K562 (cell line): ENCODE measurements at regions of chr11 and their contacts with region 1.

Region 1: GRCh38 chr11:3644817-3645235 is at the start of gene ART1:
- DNase-seq: peak; percentile 61 to 78 (median 72)
- ATAC-seq: peak; percentile 57
- H3K4me3 ChIP-seq: no peak within 1 kb of the TSS
- H3K27ac ChIP-seq: no peak within 1 kb of the TSS
- H3K4me1 ChIP-seq: peaks cover 21 to 29% of the 10 kb centered on the region in 2 experiments; a peak in 4 of 5 replicates
- H3K27me3 ChIP-seq: peaks cover 0 to 5% of the 10 kb centered on the region in 2 experiments; a peak in 1 of 5 replicates
- CTCF ChIP-seq: peak; percentile 21 to 32 (median 26); a peak in 2 of 6 replicates
- EP300 ChIP-seq: no peak
- POLR2A ChIP-seq: no peak
- RAD21 ChIP-seq: no peak
- polyA plus RNA-seq, gene ART1: not detected

Region 2: GRCh38 chr11:3037040-3037944 is 607.5 kb before region 1 on chr11:
- CTCF ChIA-PET with region 1: no interaction called
- POLR2A ChIA-PET with region 1: no interaction called
- in situ Hi-C with region 1: no loop called
- intact Hi-C with region 1: no loop called
- DNase-seq: peak; percentile 58 to 81 (median 62)
- ATAC-seq: peak; percentile 95
- H3K4me3 ChIP-seq: no peak overlapping the region
- H3K27ac ChIP-seq: no peak overlapping the region
- H3K4me1 ChIP-seq: no peaks in the 10 kb centered on the region; a peak in 1 of 5 replicates
- H3K27me3 ChIP-seq: no peaks in the 10 kb centered on the region
- CTCF ChIP-seq: peak; percentile 83 to 88 (median 88)
- EP300 ChIP-seq: no peak
- POLR2A ChIP-seq: no peak
- RAD21 ChIP-seq: peak; percentile 74 to 80

Region 3: DNA sequence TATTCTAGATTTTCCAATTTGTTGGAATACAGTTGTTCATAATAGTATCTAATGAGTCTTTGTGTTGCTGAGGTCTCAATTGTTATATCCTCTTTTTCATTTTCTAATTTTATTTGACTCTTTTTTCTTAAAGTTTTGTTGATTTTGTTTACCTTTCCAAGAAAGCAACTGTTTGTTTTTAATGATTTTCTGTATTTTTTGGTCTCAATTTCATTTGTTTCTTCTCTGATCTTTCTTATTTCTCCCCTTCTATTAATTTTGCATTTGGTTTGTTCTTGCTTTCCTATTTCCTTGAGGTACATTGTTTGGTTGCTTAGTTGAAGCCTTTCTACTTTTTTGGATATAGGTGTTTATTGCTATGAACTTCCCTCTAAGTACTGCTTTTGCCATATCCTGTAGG is 1515.0 kb after region 1 on chr11:
- CTCF ChIA-PET with region 1: no interaction called
- POLR2A ChIA-PET with region 1: no interaction called
- in situ Hi-C with region 1: loop called (anchors 5 kb)
- intact Hi-C with region 1: no loop called
- DNase-seq: no peak
- ATAC-seq: no peak; the same call in 1 of the 3 replicates
- H3K4me3 ChIP-seq: no peak overlapping the region
- H3K27ac ChIP-seq: 0 out of 3 replicates have a peak overlapping the region, but pooled peaks have one; percentile 7
- H3K4me1 ChIP-seq: peaks cover 0 to 3% of the 10 kb centered on the region in 2 experiments; a peak in 2 of 5 replicates
- H3K27me3 ChIP-seq: no peaks in the 10 kb centered on the region
- CTCF ChIP-seq: no peak
- EP300 ChIP-seq: no peak
- POLR2A ChIP-seq: no peak
- RAD21 ChIP-seq: no peak